ENCODE measurements at regions of chr3 and their contacts with region 1.

Region 1: DNA sequence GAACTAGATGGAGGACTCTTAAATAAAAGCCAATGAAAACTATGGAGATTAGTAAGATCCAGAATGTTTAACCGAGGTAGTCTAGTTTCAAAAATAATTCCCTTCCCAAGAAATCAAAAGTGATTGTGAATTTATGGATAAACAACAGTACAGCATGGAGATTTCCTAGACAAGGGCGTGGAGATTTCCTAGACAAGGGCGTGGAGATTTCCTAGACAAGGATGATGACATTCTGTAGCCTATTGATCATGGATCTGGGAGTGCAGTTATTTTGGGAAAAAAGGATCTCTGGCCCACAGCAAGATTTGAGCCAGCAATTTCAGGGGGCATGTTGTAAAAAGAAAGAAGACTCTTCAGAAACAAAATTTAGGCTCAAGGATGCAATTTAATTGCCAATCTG is 175.3 kb downstream of the RAP2B start:
- DNase-seq: no peak
- H3K4me3 ChIP-seq: no peak overlapping the region
- H3K27ac ChIP-seq: no peak overlapping the region
- H3K4me1 ChIP-seq: no peaks in the 10 kb centered on the region
- H3K27me3 ChIP-seq: no peaks in the 10 kb centered on the region
- CTCF ChIP-seq: no peak
- POLR2A ChIP-seq: no peak

Region 2: GRCh38 chr3:153357436-153357835 is 20.1 kb after region 1 on chr3:
- intact Hi-C with region 1: loop called (anchors 1 kb)
- DNase-seq: no peak
- H3K4me3 ChIP-seq: no peak overlapping the region
- H3K27ac ChIP-seq: no peak overlapping the region
- H3K4me1 ChIP-seq: no peaks in the 10 kb centered on the region
- H3K27me3 ChIP-seq: no peaks in the 10 kb centered on the region
- CTCF ChIP-seq: no peak
- POLR2A ChIP-seq: no peak

Region 3: GRCh38 chr3:154018100-154018696 is 680.8 kb after region 1 on chr3:
- intact Hi-C with region 1: no loop called
- DNase-seq: no peak
- H3K4me3 ChIP-seq: no peak overlapping the region
- H3K27ac ChIP-seq: no peak overlapping the region
- H3K4me1 ChIP-seq: no peaks in the 10 kb centered on the region
- H3K27me3 ChIP-seq: no peaks in the 10 kb centered on the region
- CTCF ChIP-seq: no peak
- POLR2A ChIP-seq: no peak

Region 4: DNA sequence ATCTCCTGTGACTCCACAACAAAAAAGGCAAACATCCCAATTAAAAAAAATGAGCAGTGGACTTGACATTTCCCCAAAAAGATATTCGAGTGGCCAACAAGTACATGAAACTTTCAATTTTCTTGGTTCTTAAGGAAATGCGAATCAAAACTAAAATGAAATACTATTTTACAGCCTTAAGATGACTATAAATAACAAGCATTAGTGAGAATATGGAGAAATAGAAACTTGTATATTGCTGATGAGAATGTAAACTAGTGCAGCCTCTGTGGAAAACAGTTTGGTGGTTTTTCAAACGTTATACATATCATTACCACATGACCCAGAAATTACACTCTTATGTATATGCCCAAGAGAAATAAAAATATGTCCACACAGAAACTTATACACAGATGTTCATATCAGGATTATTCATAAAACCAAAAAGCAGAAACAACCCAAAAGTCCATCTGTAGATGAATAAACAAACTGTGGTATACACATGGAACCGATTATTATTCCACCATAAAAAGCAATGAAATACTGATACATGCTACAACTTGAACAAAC is 1245.8 kb after region 1 on chr3:
- intact Hi-C with region 1: no loop called
- DNase-seq: no peak
- H3K4me3 ChIP-seq: no peak overlapping the region
- H3K27ac ChIP-seq: no peak overlapping the region
- H3K4me1 ChIP-seq: no peaks in the 10 kb centered on the region
- H3K27me3 ChIP-seq: no peaks in the 10 kb centered on the region
- CTCF ChIP-seq: no peak
- POLR2A ChIP-seq: no peak

Measured in vagina (tissue), 2 donors.